Naive thymus-derived CD4-positive, alpha-beta T cell (primary cell): ENCODE measurements at regions of chr7 and their contacts with region 1.

Region 1: DNA sequence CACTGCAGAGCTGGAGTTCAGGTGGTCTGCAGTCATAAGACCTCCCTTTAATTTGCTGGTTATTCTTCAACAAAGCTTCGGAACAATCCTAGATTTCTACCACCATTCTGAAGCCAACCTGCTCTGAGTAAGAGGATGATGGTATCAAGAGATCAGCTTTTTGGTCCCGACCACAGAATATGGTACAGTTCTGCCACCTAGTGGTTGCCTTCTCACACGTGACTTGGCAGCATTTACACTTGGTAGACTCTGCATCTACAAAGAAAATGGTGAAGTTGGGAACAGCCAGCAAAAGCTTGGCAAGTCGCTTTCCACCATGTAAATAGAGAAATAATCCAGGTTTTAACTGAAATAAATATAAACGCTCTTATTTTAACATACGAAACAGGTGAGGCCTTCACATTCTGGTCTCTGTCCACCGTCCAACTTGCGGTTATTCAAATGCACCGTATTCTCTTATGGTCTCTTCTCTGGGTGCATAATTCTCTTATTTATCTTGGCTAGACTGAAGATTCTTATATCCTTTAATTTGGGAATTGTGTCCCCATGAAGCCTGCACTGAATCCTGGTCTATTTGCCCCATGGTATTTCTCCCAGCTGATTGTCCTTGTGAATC is 173.9 kb upstream of the GRM3 start:
- DNase-seq: peak in 5 of 9 donors; percentile 1 to 27 (median 13)
- ATAC-seq: peak; percentile 60
- H3K4me3 ChIP-seq: no peak overlapping the region
- H3K4me3 Mint-ChIP-seq: no peak overlapping the region
- H3K27ac ChIP-seq: no peak overlapping the region
- H3K27ac Mint-ChIP-seq: no peak overlapping the region
- H3K4me1 ChIP-seq: no peaks in the 10 kb centered on the region
- H3K4me1 Mint-ChIP-seq: no peaks in the 10 kb centered on the region
- H3K27me3 ChIP-seq: no peaks in the 10 kb centered on the region
- H3K27me3 Mint-ChIP-seq: no peaks in the 10 kb centered on the region

Region 2: GRCh38 chr7:85030893-85031292 is 1438.9 kb before region 1 on chr7:
- CTCF ChIA-PET with region 1: no interaction called
- POLR2A ChIA-PET with region 1: no interaction called
- intact Hi-C with region 1: loop called in 1 of 2 experiments (anchors 2 kb)
- DNase-seq: no peak
- ATAC-seq: no peak
- H3K4me3 ChIP-seq: no peak overlapping the region
- H3K4me3 Mint-ChIP-seq: no peak overlapping the region
- H3K27ac ChIP-seq: no peak overlapping the region
- H3K27ac Mint-ChIP-seq: no peak overlapping the region
- H3K4me1 ChIP-seq: no peaks in the 10 kb centered on the region
- H3K4me1 Mint-ChIP-seq: no peaks in the 10 kb centered on the region
- H3K27me3 ChIP-seq: no peaks in the 10 kb centered on the region
- H3K27me3 Mint-ChIP-seq: peaks cover 0 to 15% (median 3%) of the 10 kb centered on the region in 5 donors

Region 3: DNA sequence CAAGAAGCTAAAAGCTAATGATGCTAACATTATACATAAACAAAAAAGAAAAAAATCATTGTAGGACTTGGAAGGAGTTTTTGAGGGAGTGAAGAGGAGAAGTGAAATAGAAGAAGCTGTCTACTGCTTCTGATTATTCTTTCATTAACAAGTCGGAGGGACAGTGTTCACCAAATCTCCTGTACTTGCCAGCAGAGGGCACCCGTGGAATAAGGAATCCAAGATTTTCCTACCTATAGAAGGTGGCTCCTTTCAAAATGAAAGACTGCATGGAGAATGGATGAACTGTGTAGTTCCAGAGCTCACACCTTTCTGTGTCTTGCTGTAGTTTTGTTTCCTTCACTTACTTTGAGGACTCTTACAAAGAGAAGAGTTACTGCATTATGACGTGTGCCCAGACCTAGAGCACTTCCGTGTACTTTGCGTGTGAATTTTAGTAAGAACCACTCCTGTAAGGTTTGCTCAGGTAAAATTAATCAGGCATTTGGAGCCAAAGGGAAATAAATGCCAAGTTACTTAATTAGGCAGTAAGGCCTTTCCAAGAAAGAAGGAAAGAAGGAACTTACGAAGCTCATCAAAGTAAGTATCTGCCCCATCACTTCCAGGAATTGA is 1428.1 kb before region 1 on chr7:
- CTCF ChIA-PET with region 1: no interaction called
- POLR2A ChIA-PET with region 1: no interaction called
- intact Hi-C with region 1: loop called in 1 of 2 experiments (anchors 5 kb)
- DNase-seq: peak in 2 of 9 donors; percentile 2 to 23
- ATAC-seq: no peak
- H3K4me3 ChIP-seq: no peak overlapping the region
- H3K4me3 Mint-ChIP-seq: no peak overlapping the region
- H3K27ac ChIP-seq: no peak overlapping the region
- H3K27ac Mint-ChIP-seq: no peak overlapping the region
- H3K4me1 ChIP-seq: no peaks in the 10 kb centered on the region
- H3K4me1 Mint-ChIP-seq: no peaks in the 10 kb centered on the region
- H3K27me3 ChIP-seq: no peaks in the 10 kb centered on the region
- H3K27me3 Mint-ChIP-seq: peaks cover 0 to 9% (median 0%) of the 10 kb centered on the region in 5 donors

Region 4: DNA sequence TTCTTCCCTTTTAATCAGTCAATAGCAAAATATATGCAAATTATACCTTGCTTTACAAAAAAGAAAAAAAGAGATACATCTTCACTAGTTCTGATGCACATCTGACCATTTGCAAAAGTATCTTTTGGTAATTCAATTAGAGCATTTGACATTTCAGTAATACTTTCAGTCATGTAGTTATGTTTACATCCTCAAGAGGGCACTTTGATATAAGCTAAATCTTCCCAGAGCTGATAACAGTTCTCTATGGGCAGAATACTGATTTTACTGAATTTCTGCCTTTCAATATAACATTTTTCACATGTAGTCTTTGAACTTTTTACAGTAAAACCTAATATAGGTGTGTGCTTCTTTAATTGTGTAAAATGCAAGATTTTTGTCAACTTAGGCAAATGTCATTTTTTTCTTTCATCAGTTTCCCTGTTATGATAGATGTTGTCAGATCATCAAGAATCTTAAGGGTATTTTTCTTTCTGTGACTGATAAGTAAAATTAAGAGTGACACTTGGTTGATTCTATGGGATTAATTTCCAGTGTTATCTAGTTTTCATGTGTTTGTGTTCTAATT is 579.5 kb before region 1 on chr7:
- CTCF ChIA-PET with region 1: no interaction called
- POLR2A ChIA-PET with region 1: no interaction called
- intact Hi-C with region 1: loop called in 1 of 2 experiments (anchors 1 kb)
- DNase-seq: no peak
- ATAC-seq: no peak
- H3K4me3 ChIP-seq: no peak overlapping the region
- H3K4me3 Mint-ChIP-seq: no peak overlapping the region
- H3K27ac ChIP-seq: no peak overlapping the region
- H3K27ac Mint-ChIP-seq: no peak overlapping the region
- H3K4me1 ChIP-seq: no peaks in the 10 kb centered on the region
- H3K4me1 Mint-ChIP-seq: no peaks in the 10 kb centered on the region
- H3K27me3 ChIP-seq: no peaks in the 10 kb centered on the region
- H3K27me3 Mint-ChIP-seq: no peaks in the 10 kb centered on the region

Region 5: GRCh38 chr7:86431761-86432160 is 38.0 kb before region 1 on chr7:
- CTCF ChIA-PET with region 1: no interaction called
- POLR2A ChIA-PET with region 1: no interaction called
- intact Hi-C with region 1: no loop called
- DNase-seq: no peak
- ATAC-seq: no peak
- H3K4me3 ChIP-seq: no peak overlapping the region
- H3K4me3 Mint-ChIP-seq: no peak overlapping the region
- H3K27ac ChIP-seq: no peak overlapping the region
- H3K27ac Mint-ChIP-seq: no peak overlapping the region
- H3K4me1 ChIP-seq: no peaks in the 10 kb centered on the region
- H3K4me1 Mint-ChIP-seq: no peaks in the 10 kb centered on the region
- H3K27me3 ChIP-seq: no peaks in the 10 kb centered on the region
- H3K27me3 Mint-ChIP-seq: no peaks in the 10 kb centered on the region